K562 (cell line): ENCODE measurements at regions of chr9 and their contacts with region 1.

Region 1: GRCh38 chr9:38068866-38069629 is at the start of gene SHB:
- DNase-seq: peak; percentile 89 to 99 (median 98)
- ATAC-seq: peak; percentile 77
- H3K4me3 ChIP-seq: peak within 1 kb of the TSS; percentile 90
- H3K27ac ChIP-seq: peak within 1 kb of the TSS; percentile 81
- H3K4me1 ChIP-seq: peaks cover 39 to 49% of the 10 kb centered on the region in 2 experiments
- H3K27me3 ChIP-seq: no peaks in the 10 kb centered on the region; a peak in 1 of 5 replicates
- CTCF ChIP-seq: peak in 1 of 3 experiments; percentile 53; a peak in 1 of 6 replicates
- EP300 ChIP-seq: no peak
- POLR2A ChIP-seq: peak; percentile 62; the same call in 1 of the 2 replicates
- RAD21 ChIP-seq: peak in 1 of 2 experiments; percentile 59; a peak in 1 of 4 replicates
- polyA plus RNA-seq, gene SHB: 0.78 to 1.0 TPM

Region 2: DNA sequence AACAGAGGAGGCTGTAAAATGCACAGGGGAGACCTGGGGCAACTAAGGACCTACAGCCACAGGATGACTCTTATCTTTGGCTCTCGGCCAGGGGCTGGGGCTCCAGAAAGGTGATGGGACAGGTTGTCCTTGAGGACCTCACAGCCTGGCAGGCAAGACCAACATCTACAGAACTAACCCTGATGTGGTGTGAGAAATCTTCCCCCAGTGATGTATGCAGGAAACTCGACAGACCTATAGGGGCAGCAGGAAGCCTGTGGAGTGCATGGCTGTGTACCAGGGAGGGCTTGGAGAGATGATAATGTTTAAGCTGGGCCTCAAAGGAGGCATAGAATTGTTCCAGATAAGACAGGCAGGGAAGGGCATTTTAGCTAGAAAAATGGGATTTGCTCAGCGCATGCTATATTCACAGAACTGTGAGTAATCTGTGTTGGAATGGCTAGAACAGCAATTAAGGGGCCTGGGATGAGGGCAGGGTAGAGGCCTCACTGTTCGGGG is 96.6 kb before region 1 on chr9:
- CTCF ChIA-PET with region 1: no interaction called
- POLR2A ChIA-PET with region 1: no interaction called
- in situ Hi-C with region 1: no loop called
- intact Hi-C with region 1: loop called (anchors 2 kb)
- DNase-seq: peak in 1 of 4 experiments; percentile 34
- ATAC-seq: peak; percentile 62
- H3K4me3 ChIP-seq: no peak overlapping the region
- H3K27ac ChIP-seq: no peak overlapping the region
- H3K4me1 ChIP-seq: peaks cover 15 to 25% of the 10 kb centered on the region in 2 experiments
- H3K27me3 ChIP-seq: no peaks in the 10 kb centered on the region
- CTCF ChIP-seq: peak; percentile 15 to 38 (median 30); a peak in 4 of 6 replicates
- EP300 ChIP-seq: no peak
- POLR2A ChIP-seq: no peak
- RAD21 ChIP-seq: peak in 1 of 2 experiments; percentile 27; a peak in 2 of 4 replicates

Region 3: DNA sequence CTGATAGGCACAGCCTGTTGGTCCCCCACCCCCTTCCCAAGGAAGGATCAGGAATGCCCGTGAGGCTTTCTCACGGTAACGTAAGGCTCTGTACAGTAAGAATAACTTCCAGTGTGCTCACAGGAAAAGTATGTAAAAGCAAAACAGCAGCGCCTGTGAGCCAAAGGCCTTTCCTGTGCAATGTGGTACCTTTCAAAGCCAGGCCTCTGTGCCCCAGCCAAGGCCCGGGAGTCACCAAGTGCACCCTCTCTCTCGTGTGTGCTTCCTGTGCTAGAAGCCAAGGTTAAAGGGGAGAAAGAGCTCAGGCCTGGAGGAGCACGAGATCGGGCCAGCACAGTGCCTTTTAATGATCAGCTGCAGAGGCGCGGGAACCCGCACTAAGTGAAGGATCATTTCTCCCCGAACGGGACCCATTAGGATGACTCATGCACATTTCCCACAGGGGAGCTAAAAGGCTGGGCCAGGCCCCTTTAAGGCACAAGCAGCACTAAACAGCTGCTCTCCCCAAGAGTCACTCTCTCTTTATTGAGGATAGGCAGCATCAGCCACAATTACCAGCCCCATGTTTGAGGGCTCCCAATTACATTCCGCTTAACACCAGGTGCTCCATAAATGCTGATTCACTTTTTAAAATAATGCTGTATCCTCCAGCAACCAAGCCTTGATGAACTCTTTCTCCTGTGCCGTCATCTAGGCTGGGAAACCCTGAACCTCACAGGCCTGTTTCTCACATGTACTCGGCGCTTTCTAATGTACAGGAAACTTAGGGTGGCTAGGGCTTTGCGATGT is 42.8 kb before region 1 on chr9:
- CTCF ChIA-PET with region 1: no interaction called
- POLR2A ChIA-PET with region 1: no interaction called
- in situ Hi-C with region 1: no loop called
- intact Hi-C with region 1: loop called (anchors 5 kb)
- DNase-seq: peak; percentile 62 to 66 (median 64)
- ATAC-seq: peak; percentile 70
- H3K4me3 ChIP-seq: no peak overlapping the region
- H3K27ac ChIP-seq: no peak overlapping the region; the same call in 2 of the 3 replicates
- H3K4me1 ChIP-seq: peaks cover 5 to 12% of the 10 kb centered on the region in 2 experiments; a peak in 3 of 5 replicates
- H3K27me3 ChIP-seq: no peaks in the 10 kb centered on the region
- CTCF ChIP-seq: no peak
- EP300 ChIP-seq: no peak
- POLR2A ChIP-seq: no peak
- RAD21 ChIP-seq: no peak

Region 4: DNA sequence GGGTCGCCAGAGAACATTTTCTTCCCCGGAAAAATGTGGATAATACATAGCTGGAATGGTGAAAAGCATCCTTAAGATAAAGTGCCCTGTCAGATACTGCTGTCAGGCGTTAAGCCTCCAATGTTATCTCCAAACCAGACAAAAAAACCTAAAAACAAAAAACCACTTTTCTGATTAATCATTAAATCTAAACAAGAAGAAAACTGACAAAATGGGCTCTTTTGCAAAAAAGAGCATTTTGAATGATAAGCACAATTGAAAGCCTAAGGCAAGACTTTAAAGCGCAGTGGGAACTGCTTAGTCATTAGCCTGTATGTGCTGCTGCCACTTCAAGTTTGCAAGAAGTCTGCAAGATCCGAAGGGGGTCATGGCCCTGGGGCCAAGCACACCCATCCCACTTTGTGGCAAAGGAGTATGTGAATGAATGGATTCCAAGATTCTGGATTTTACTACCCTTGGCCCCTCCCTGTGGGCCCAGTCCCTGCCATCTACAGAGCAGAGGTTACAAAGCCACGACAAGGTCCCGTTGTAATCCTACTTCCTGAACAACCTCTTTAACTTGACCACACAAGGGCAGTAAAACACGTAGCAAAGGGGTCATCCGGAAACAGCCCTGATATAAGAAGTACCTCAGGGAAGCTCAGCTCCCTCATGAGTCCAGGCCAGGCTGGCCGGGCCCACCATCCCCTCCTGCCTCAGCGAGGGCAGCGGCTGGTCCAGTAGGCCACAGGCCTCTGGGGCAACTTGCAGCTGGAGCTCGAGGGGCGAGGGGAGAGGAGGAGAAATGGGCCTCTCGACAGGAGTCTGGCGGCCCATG is 29.8 kb before region 1 on chr9:
- CTCF ChIA-PET with region 1: interaction called, 3 read pairs
- POLR2A ChIA-PET with region 1: interaction called, 4 read pairs
- in situ Hi-C with region 1: no loop called
- intact Hi-C with region 1: loop called (anchors 2 kb)
- DNase-seq: peak; percentile 53 to 79 (median 62)
- ATAC-seq: peak; percentile 66
- H3K4me3 ChIP-seq: no peak overlapping the region
- H3K27ac ChIP-seq: peak overlapping the region; percentile 89
- H3K4me1 ChIP-seq: peaks cover 55 to 58% of the 10 kb centered on the region in 2 experiments
- H3K27me3 ChIP-seq: no peaks in the 10 kb centered on the region
- CTCF ChIP-seq: peak in 1 of 3 experiments; percentile 8; a peak in 1 of 6 replicates
- EP300 ChIP-seq: no peak; the same call in 1 of the 2 replicates
- POLR2A ChIP-seq: 0 out of 2 replicates have a peak, but pooled peaks have one; percentile 39
- RAD21 ChIP-seq: 0 out of 4 replicates have a peak, but pooled peaks of 1 of the 2 experiments have one; percentile 11